Heart right ventricle (tissue), 16 donors: ENCODE measurements at regions of chr5 and their contacts with region 1.

Region 1: GRCh38 chr5:35003018-35003957 is 44.5 kb downstream of the AGXT2 start:
- DNase-seq: peak; percentile 24
- ATAC-seq: peak in 6 of 8 donors; percentile 20 to 74 (median 40)
- H3K4me3 ChIP-seq: no peak overlapping the region
- H3K27ac ChIP-seq: no peak overlapping the region
- H3K4me1 ChIP-seq: no peaks in the 10 kb centered on the region
- H3K27me3 ChIP-seq: peaks cover 0 to 40% (median 30%) of the 10 kb centered on the region in 7 donors
- CTCF ChIP-seq: peak; percentile 45 to 89 (median 83)

Region 2: GRCh38 chr5:34474573-34475021 is 528.7 kb before region 1 on chr5:
- intact Hi-C with region 1: loop called in 4 of 10 experiments (anchors 5 to 10 kb)
- DNase-seq: no peak
- ATAC-seq: peak in 7 of 8 donors; percentile 47 to 76 (median 63)
- H3K4me3 ChIP-seq: no peak overlapping the region
- H3K27ac ChIP-seq: no peak overlapping the region
- H3K4me1 ChIP-seq: no peaks in the 10 kb centered on the region
- H3K27me3 ChIP-seq: peaks cover 0 to 28% (median 4%) of the 10 kb centered on the region in 7 donors
- CTCF ChIP-seq: peak; percentile 84 to 96 (median 94)

Region 3: DNA sequence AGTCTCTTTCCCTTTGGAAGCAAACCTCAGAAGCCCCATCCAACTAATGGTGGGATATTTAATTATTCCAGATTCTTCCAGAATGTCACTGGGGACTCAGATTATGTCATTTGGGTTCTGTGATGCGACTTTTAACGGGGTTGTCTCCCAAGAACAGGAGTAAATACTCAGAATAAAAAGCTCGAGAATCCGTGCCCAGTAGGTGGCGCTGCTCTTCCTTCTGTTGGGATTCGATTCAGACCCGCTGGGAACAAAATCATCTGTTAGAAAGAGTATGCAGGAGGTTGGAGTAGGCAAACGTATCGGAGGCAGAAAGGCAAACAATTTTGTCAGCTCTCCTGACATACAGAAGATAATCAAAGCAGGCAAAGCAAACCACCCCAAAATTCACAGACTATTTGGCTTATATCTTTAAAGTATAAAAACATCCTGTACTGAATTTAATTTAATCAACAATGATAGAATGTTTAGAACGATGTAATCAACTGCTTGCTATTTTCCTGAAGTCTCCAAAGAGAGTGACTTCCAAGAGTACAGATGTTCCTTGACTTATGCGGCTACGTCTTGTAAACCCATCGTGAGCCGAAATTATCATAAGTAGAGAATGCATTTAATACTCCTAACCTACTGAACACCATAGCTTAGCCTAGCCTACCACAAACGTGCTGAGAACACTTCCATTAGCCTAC is 517.0 kb before region 1 on chr5:
- intact Hi-C with region 1: loop called in 5 of 10 experiments (anchors 5 to 10 kb)
- DNase-seq: peak; percentile 78
- ATAC-seq: peak; percentile 65 to 91 (median 78)
- H3K4me3 ChIP-seq: no peak overlapping the region
- H3K27ac ChIP-seq: no peak overlapping the region
- H3K4me1 ChIP-seq: peaks cover 0 to 19% (median 7%) of the 10 kb centered on the region in 9 donors
- H3K27me3 ChIP-seq: no peaks in the 10 kb centered on the region
- CTCF ChIP-seq: peak; percentile 62 to 86 (median 83)